Right ventricle myocardium inferior (tissue), 1 donor: ENCODE measurements at regions of chr12 and their contacts with region 1.

Region 1: DNA sequence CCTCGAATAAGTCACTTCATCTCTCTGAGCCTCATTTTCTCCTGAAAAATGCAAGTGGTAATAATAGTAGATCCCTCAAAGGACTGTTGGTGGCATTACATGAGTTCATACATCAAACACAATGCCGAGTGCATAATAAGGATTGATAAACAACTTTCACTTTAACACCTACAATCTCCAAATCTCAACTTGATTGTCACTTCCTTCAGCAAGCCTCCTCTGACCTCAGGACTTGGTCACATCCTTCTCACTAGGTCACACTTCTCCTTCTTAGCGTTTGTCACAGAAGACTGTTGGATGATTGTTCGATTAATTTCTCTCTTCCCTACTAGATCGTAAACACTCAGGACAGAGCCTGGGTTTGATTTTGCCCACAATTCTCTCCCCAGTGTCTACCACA is 7.9 kb upstream of the PRKAB1 start:
- DNase-seq: no peak
- ATAC-seq: no peak

Region 2: GRCh38 chr12:119780786-119781434 is 120.8 kb after region 1 on chr12:
- intact Hi-C with region 1: loop called (anchors 5 kb)
- DNase-seq: no peak
- ATAC-seq: no peak